WTC11 (cell line): ENCODE measurements at regions of chr1 and their contacts with region 1.

Region 1: DNA sequence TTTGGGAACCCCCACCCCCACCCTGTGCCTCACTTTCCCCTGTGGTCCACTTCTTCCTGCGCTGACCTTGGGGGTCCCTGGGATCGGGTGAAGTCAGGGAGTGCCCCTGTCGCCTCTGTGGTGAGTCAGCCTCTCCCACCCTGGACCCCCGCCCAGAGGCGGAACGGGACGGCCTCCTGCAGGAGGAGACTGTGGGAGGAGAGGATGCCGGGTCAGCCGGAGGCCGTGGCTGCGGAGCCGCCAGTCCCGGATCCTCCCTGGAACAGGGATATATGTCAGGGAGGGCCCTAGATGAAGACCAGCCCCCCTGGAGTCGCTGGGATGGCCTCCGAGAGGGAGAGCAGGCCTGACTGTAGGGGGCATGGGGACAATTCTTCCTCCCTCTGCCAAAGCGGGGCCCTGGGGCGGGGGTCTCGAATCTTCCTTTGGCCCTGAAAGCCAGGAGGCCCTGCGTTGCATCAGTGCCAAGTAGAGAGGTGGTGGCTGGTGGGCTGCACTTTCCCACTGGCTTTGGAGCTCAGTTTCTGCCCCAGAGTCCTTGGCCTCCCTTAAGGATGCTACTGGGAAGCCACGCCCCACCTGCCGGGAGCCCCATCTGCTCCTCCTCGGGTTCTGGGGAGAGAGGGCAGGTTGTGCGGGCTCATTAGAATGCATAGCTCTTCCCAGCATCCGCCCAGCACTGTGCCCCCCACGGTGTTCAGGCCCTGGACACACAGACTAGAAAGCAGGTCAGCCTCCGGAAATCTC is 930 bp downstream of the ARHGEF10L start:
- DNase-seq: peak; percentile 95
- ATAC-seq: peak; percentile 80
- H3K4me3 Mint-ChIP-seq: peak overlapping the region; percentile 83
- H3K27ac Mint-ChIP-seq: peak overlapping the region; percentile 88
- H3K4me1 Mint-ChIP-seq: peaks cover 55% of the 10 kb centered on the region
- H3K27me3 Mint-ChIP-seq: no peaks in the 10 kb centered on the region
- CTCF ChIP-seq: no peak

Region 2: DNA sequence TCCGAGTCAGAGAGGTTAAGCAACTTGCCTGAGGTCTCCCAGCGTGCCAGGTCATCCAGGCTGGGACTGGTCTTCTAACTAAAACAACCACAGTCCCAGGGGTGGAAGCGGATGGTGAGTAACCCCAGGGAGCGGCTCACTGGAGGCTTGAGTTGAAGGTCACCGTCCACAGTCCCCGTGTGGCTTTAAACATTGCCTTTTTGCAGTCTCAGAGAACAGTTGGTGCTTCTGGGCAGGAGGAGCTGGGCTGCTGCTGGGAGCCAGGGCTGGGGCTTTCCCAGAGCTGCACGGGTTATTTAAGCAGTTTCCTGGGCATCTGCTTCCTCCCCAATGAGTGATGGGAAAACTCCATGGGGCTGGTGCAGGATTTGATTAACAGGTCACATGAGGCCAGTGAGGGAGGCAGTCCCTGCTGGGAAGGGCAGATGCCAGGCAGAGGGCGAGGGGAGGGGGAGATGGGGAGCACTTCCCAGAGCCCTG is 11.4 kb after region 1 on chr1:
- CTCF ChIA-PET with region 1: interaction called, 16 read pairs
- POLR2A ChIA-PET with region 1: interaction called, 13 read pairs
- DNase-seq: no peak
- ATAC-seq: peak; percentile 4
- H3K4me3 Mint-ChIP-seq: peak overlapping the region; percentile 16; the same call in 1 of the 2 replicates
- H3K27ac Mint-ChIP-seq: peak overlapping the region; percentile 94
- H3K4me1 Mint-ChIP-seq: peaks cover 90% of the 10 kb centered on the region
- H3K27me3 Mint-ChIP-seq: no peaks in the 10 kb centered on the region
- CTCF ChIP-seq: no peak

Region 3: DNA sequence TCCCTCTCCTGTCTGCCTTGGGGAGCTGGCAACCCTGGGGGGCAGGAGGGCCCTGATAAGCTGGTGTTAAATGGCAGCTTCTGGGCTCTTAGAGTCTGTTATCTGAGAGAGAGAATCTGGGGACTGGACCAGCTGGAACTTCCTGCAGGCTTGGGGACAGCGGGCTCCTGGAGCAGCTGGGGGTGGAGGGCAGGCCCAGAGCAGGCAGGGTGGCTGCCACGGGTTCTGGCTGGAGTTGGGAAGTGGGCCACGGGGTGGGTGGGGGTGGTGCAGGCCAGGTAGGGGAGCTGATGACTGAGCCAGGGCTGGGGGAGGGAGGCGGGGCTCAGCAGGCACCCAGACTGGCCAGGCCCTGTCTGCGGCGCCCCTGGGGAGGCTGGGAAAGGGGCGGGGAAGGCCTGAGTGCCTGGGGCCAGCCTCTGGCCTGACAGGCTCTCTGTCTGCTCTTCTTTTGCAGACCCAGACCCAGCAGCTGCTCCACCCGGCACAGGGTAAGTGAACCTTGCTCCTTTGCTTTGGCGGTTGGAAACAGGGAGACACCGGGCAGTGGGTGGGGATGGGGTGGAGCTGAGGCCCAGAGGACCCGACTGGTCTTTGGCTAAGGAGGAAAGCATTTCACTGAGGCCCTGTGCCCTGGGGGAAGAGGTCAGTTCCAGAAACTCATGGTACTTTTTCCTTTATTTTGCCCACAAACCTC is 47.7 kb after region 1 on chr1:
- CTCF ChIA-PET with region 1: interaction called, 12 read pairs
- POLR2A ChIA-PET with region 1: interaction called, 8 read pairs
- DNase-seq: peak; percentile 56
- ATAC-seq: peak; percentile 53
- H3K4me3 Mint-ChIP-seq: no peak overlapping the region
- H3K27ac Mint-ChIP-seq: peak overlapping the region; percentile 89
- H3K4me1 Mint-ChIP-seq: peaks cover 38% of the 10 kb centered on the region
- H3K27me3 Mint-ChIP-seq: no peaks in the 10 kb centered on the region
- CTCF ChIP-seq: no peak